ENCODE measurements at regions of chr2 and their contacts with region 1.

Region 1: DNA sequence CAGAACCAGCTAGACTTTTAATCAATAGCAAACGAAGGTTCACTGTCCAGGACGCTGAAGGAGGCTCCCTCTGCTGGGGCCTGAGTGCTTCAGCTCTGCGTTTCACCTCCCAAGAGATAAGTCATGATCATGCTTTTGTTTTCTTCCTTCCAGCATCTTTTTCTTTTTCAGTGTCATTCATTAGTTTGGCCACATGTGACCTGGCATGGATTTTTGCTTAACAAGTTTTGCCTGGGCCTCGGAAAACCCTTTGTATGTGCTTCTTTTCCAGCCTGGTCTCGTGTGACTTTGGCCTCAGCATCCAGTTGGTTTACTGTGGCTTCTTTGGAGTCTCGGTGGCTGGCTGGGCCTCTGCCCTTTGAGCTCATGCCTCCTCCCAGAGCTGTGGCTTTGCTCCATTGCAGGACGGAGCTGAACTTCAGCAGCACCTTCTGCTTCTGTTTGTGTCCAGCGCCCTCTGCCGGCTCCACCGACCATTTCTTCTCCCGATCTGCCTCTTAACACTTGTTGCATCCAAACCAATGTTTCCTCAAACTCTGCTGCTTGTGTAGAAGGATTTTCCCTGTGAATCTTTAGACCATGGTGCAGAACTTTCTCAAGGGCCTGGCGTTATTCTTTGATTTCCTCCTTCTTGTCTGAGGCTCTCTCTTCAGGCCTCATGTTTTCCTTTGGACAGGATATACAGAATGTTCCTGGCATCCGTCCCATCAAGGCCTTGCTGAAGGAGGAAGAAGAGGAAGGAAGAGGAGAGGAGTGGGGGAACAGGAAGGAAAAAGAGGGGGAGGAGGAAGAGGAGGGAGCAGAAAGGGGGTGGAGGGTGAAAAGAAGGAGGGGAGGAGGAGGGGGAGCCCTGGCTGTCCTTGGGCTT is 23.6 kb upstream of the HES6 start:
- DNase-seq: peak; percentile 95
- ATAC-seq: peak; percentile 95

Region 2: DNA sequence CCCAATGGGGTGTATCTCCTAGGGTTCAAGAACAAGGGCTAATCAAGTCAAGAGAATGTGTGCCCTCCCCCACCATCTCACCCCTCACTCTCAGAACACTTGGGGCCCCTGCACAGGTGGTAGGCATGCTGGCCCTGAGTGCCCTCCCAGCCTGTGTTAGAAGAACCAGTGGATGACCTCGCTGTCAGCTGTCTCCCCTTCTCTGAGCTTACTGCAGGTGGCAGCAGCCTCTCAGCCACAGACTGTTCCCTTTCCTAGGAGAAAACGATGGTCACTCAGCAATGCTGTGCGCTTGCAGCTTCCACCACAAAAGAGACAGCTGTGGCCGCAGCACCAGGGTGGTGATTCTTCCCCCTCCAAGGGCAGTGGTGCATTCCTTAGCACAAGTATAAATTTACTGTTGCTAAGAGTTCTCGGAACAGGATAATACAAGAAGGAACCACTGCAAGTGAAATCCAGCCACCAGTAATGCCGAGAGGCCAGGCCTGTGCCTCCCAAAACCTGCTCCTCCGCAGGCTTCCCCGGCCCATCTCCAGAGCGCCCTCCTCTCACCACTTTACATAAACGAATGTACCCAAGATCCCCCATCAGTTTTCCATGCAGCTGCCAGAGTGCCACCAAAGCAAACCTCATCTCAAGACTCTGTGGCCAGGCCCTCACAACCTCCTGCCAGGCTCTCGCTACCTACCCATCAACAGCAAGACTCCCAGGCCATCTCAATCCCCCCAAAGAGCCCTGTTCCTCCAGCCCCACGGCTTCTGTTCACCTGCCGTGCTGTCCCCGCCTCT is 404.9 kb before region 1 on chr2:
- intact Hi-C with region 1: loop called (anchors 5 kb)
- DNase-seq: peak; percentile 83
- ATAC-seq: peak; percentile 92

Region 3: GRCh38 chr2:238183821-238184220 is 79.6 kb before region 1 on chr2:
- intact Hi-C with region 1: no loop called
- DNase-seq: no peak
- ATAC-seq: no peak

Region 4: GRCh38 chr2:238242731-238243495 is 20.5 kb before region 1 on chr2:
- intact Hi-C with region 1: no loop called
- DNase-seq: no peak
- ATAC-seq: peak; percentile 29